Transverse colon (tissue), 4 donors: ENCODE measurements at regions of chr10 and their contacts with region 1.

Region 1: GRCh38 chr10:7027913-7028808 is 382.7 kb downstream of the SFMBT2 start:
- DNase-seq: no peak
- H3K4me3 ChIP-seq: no peak overlapping the region
- H3K27ac ChIP-seq: no peak overlapping the region
- H3K4me1 ChIP-seq: no peaks in the 10 kb centered on the region
- H3K27me3 ChIP-seq: no peaks in the 10 kb centered on the region
- CTCF ChIP-seq: no peak
- EP300 ChIP-seq: no peak
- POLR2A ChIP-seq: no peak

Region 2: GRCh38 chr10:7006566-7006965 is 21.6 kb before region 1 on chr10:
- in situ Hi-C with region 1: no loop called
- intact Hi-C with region 1: loop called (anchors 1 kb)
- DNase-seq: no peak
- H3K4me3 ChIP-seq: no peak overlapping the region
- H3K27ac ChIP-seq: no peak overlapping the region
- H3K4me1 ChIP-seq: no peaks in the 10 kb centered on the region
- H3K27me3 ChIP-seq: no peaks in the 10 kb centered on the region
- CTCF ChIP-seq: no peak
- EP300 ChIP-seq: no peak
- POLR2A ChIP-seq: no peak

Region 3: GRCh38 chr10:7090529-7090928 is 62.4 kb after region 1 on chr10:
- in situ Hi-C with region 1: no loop called
- intact Hi-C with region 1: no loop called
- DNase-seq: no peak
- H3K4me3 ChIP-seq: no peak overlapping the region
- H3K27ac ChIP-seq: peak overlapping the region; percentile 16 to 59 (median 39)
- H3K4me1 ChIP-seq: peaks cover 0 to 7% (median 0%) of the 10 kb centered on the region in 4 donors
- H3K27me3 ChIP-seq: no peaks in the 10 kb centered on the region
- CTCF ChIP-seq: no peak
- EP300 ChIP-seq: peak; percentile 12
- POLR2A ChIP-seq: no peak